ENCODE measurements at regions of chr15 and their contacts with region 1.

Region 1: DNA sequence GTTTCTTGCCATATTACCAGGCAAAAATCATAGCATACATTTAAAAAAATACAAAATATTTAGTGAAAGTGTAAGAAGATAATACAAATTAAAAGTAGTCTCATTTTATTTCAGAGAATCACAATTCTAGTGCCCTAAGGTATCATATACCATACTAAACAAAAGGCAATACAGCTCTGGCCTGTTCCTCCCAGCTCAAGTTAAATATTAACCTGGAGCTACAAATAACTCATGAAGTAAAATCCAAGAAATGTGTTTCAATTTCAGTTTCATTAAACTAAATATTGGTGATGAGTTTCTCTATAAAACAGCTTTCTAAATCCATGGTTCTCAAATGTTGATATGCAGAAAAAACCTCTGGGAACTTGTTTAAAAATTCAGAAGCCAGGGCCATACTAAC is 67.7 kb downstream of the INO80 start:
- DNase-seq: no peak
- ATAC-seq: no peak
- H3K4me3 ChIP-seq: no peak overlapping the region
- H3K27ac ChIP-seq: no peak overlapping the region
- H3K4me1 ChIP-seq: no peaks in the 10 kb centered on the region
- H3K27me3 ChIP-seq: no peaks in the 10 kb centered on the region
- CTCF ChIP-seq: no peak

Region 2: GRCh38 chr15:41079717-41080116 is 31.3 kb after region 1 on chr15:
- intact Hi-C with region 1: loop called in 1 of 2 experiments (anchors 5 kb)
- DNase-seq: no peak
- ATAC-seq: no peak
- H3K4me3 ChIP-seq: no peak overlapping the region
- H3K27ac ChIP-seq: no peak overlapping the region
- H3K4me1 ChIP-seq: no peaks in the 10 kb centered on the region
- H3K27me3 ChIP-seq: no peaks in the 10 kb centered on the region
- CTCF ChIP-seq: no peak

Measured in psoas muscle (tissue), 8 donors.